Right ventricle myocardium inferior (tissue), 1 donor: ENCODE measurements at regions of chr20 and their contacts with region 1.

Region 1: GRCh38 chr20:59933849-59934596 is 586 bp upstream of the SYCP2 start:
- DNase-seq: peak; percentile 92
- ATAC-seq: peak; percentile 92

Region 2: GRCh38 chr20:59403261-59403961 is 530.6 kb before region 1 on chr20:
- intact Hi-C with region 1: no loop called
- DNase-seq: no peak
- ATAC-seq: no peak

Region 3: GRCh38 chr20:59782986-59783640 is 150.9 kb before region 1 on chr20:
- intact Hi-C with region 1: loop called (anchors 10 kb)
- DNase-seq: no peak
- ATAC-seq: peak; percentile 38